ENCODE measurements at regions of chr20 and their contacts with region 1.

Region 1: GRCh38 chr20:3679749-3680700 is 1.8 kb downstream of the ADAM33 start:
- DNase-seq: peak; percentile 63 to 92
- ATAC-seq: peak; percentile 81
- H3K4me3 ChIP-seq: peak overlapping the region; percentile 20 to 45
- H3K27ac ChIP-seq: peak overlapping the region; percentile 49 to 88
- H3K4me1 ChIP-seq: no peaks in the 10 kb centered on the region
- H3K27me3 ChIP-seq: no peaks in the 10 kb centered on the region

Region 2: DNA sequence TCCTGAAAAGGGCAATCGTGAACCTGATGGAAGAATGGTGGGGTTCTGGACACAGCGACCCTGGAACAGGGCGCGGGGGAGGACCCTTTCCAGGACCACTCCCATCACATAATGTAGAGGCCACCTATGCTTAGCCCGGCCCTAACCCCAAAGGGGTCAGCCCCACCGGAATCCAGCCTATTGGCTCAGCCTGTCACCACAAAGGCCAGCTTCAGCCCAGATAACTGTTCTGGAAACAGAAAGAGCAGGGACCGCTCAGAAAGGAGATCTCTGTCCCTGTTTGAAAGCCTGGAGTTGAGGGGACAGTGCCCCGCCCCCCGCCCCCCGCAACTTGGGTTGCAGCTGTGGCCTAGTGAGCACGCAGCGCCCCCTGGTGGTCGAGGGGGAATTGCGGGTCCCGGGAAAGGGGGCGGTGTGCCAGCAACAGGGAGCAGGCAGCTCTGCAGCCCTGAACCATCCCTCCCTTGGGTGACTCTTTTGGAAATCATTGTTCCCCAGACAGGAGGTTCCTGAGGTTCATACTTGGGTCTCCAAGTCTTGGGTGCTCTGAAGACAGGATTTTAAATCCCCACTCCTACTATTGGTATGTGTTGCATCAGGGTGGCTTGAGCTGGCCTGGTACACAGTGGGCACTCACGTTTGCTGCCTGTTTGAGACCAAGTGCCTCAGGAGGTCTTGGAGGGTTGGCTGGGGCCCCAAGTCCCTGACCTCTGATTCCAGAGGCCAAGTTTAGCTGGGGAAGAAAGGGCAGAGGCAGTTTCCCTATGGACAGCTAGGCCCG is 30.9 kb after region 1 on chr20:
- intact Hi-C with region 1: loop called (anchors 1 to 2 kb)
- DNase-seq: peak; percentile 78 to 94
- ATAC-seq: peak; percentile 58
- H3K4me3 ChIP-seq: no peak overlapping the region
- H3K27ac ChIP-seq: no peak overlapping the region
- H3K4me1 ChIP-seq: no peaks in the 10 kb centered on the region
- H3K27me3 ChIP-seq: no peaks in the 10 kb centered on the region

Region 3: GRCh38 chr20:3753098-3753980 is 73.3 kb after region 1 on chr20:
- intact Hi-C with region 1: loop called in 1 of 2 experiments (anchors 5 kb)
- DNase-seq: peak in 1 of 2 donors; percentile 75
- ATAC-seq: peak; percentile 70
- H3K4me3 ChIP-seq: no peak overlapping the region
- H3K27ac ChIP-seq: no peak overlapping the region
- H3K4me1 ChIP-seq: no peaks in the 10 kb centered on the region
- H3K27me3 ChIP-seq: no peaks in the 10 kb centered on the region

Region 4: DNA sequence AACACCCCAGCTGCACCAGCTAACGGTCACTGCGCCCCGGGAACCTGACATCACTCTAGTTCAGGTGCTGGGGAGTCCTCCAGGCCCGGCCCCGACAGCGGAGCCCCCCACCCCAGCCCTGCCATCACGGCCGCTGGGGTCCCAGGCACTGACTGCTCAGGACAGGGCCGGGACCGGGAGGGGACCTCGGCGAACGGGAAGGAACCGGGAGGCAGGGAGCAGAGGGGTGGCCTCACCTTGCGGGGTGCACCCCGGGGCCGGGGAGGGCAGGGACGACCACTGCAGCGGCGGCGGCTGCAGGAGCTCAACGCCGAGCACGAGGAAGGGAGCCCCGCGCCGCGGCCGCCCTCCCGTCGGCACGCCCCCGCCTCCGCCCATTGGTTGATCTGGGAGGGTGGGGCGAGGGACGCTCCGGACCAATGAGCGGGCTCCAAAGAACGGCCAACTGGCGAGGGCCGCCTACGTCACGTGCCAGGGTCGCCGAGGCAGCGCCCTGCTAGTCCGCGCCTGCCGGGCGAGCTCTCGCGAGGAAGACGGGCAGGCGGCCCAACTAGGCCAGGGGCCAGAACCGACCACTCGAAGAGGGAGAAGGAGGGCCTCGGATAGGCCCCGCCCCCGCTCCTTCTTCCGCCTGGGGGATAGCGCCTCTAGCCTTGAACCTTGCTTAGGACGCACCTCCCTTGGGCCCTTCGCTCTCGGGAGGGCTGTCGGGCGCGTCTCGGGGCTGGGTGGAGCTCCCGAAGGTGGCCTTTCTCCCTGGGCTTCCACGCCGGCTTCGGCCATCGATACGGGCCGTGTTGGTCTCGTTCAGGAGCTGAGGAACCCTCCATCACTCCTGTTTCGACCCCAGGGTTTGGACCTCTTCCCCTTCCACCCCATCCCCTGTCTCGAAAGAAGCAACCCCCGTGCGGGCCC is 87.7 kb after region 1 on chr20 and contains the start of gene ADISSP:
- intact Hi-C with region 1: loop called (anchors 5 kb)
- DNase-seq: peak; percentile 100
- ATAC-seq: peak; percentile 97
- H3K4me3 ChIP-seq: peak within 1 kb of the TSS; percentile 22 to 52
- H3K27ac ChIP-seq: peak within 1 kb of the TSS; percentile 34 to 47
- H3K4me1 ChIP-seq: no peaks in the 10 kb centered on the region
- H3K27me3 ChIP-seq: no peaks in the 10 kb centered on the region
- total RNA-seq, gene ADISSP: 13.9 to 21.1 TPM

Region 5: GRCh38 chr20:3846740-3847428 is 166.9 kb after region 1 on chr20 and contains the start of gene MAVS:
- intact Hi-C with region 1: loop called (anchors 10 kb)
- DNase-seq: peak; percentile 92 to 96
- ATAC-seq: peak; percentile 97
- H3K4me3 ChIP-seq: peak within 1 kb of the TSS; percentile 22 to 92
- H3K27ac ChIP-seq: peak within 1 kb of the TSS; percentile 71 to 77
- H3K4me1 ChIP-seq: no peaks in the 10 kb centered on the region
- H3K27me3 ChIP-seq: no peaks in the 10 kb centered on the region
- total RNA-seq, gene MAVS: 33.4 to 36.1 TPM

Measured in aorta (tissue), 5 donors.